ENCODE measurements at regions of chr16 and their contacts with region 1.

Region 1: DNA sequence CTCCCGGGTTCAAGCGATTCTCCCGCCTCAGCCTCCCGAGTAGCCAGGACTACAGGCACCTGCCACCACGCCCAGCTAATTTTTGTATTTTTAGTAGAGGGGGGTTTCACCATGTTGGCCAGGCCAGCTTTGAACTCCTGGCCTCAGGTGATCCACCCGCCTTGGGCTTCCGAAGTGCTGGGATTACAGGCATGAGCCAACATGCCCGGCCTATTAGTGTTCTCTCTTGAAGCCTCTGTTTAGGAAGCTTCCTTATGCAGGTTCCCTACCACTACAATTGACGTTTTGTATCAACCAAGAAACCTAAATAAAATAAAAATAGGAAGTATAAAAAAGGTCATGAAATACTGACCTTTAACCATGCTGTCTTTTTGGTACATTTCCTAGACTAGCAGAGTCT is 16.0 kb downstream of the CHST5 start:
- DNase-seq: no peak
- H3K4me3 Mint-ChIP-seq: no peak overlapping the region
- H3K27ac Mint-ChIP-seq: no peak overlapping the region
- H3K4me1 Mint-ChIP-seq: no peaks in the 10 kb centered on the region
- H3K27me3 Mint-ChIP-seq: no peaks in the 10 kb centered on the region
- CTCF ChIP-seq: no peak

Region 2: DNA sequence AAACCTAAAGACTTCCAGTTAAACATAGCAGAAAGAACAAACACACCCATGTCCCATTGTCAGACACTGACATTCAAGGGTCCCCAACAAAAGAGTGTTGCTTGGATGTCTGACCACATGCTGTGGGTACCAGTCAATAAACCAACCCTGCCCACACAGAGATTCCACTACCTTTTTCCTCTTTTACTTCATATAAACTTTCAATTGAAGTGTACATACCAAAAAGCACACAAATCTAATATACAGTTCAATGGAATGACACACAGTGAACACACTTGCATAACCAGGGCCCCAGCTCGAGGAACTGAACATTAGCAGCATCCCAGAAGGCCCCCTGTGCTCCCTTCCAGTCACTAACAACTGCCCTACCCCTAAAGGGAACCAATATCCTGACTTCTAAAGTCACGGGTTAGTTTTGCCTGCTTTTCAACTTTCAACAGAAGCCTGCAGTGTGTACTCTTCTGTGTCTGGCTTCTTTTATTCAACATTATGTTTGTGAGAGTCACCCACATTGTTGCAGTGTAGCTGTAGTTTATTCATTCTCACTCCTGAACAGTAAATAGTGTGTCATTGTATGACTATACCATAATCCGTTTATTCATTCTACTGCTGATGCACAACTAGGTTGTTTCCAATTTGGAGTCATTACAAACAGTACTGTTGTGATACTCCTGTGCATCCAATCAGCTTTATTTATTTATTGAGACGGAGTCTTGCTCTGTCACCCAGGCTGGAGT is 104.5 kb before region 1 on chr16:
- CTCF ChIA-PET with region 1: no interaction called
- POLR2A ChIA-PET with region 1: no interaction called
- intact Hi-C with region 1: no loop called
- DNase-seq: no peak
- H3K4me3 Mint-ChIP-seq: no peak overlapping the region
- H3K27ac Mint-ChIP-seq: no peak overlapping the region
- H3K4me1 Mint-ChIP-seq: peaks cover 8% of the 10 kb centered on the region
- H3K27me3 Mint-ChIP-seq: no peaks in the 10 kb centered on the region
- CTCF ChIP-seq: no peak

Region 3: GRCh38 chr16:75464130-75464918 is 55.6 kb before region 1 on chr16 and contains the start of gene TMEM170A:
- CTCF ChIA-PET with region 1: interaction called, 88 read pairs
- POLR2A ChIA-PET with region 1: interaction called, 17 read pairs
- intact Hi-C with region 1: no loop called
- DNase-seq: peak; percentile 99
- H3K4me3 Mint-ChIP-seq: peak within 1 kb of the TSS; percentile 95
- H3K27ac Mint-ChIP-seq: peak within 1 kb of the TSS; percentile 92
- H3K4me1 Mint-ChIP-seq: peaks cover 32% of the 10 kb centered on the region
- H3K27me3 Mint-ChIP-seq: no peaks in the 10 kb centered on the region
- CTCF ChIP-seq: peak; percentile 99
- total RNA-seq, gene TMEM170A: 20.1 and 21.8 TPM in 2 replicates

Region 4: DNA sequence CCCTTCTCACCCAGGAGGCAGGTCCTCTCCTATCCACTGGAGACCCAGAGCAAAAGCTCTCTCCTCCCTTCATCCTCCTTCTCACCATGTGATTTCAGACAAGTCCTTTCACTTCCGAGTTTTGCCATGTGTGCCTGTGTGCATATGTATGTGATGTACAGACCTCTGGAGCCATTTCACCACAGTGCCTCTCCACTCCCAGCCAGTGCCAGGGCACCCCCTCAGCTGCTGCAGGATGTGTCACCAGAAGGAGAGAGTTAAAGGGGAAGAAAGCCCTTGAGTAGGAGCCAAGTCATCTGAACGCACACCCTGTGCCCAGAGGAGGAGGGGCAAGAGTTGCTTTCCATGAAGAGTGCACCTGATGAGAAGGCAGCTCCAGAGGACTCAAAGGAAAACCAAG is 41.8 kb before region 1 on chr16:
- CTCF ChIA-PET with region 1: interaction called, 88 read pairs
- POLR2A ChIA-PET with region 1: interaction called, 46 read pairs
- intact Hi-C with region 1: no loop called
- DNase-seq: peak; percentile 67
- H3K4me3 Mint-ChIP-seq: no peak overlapping the region
- H3K27ac Mint-ChIP-seq: no peak overlapping the region
- H3K4me1 Mint-ChIP-seq: peaks cover 23% of the 10 kb centered on the region
- H3K27me3 Mint-ChIP-seq: no peaks in the 10 kb centered on the region
- CTCF ChIP-seq: no peak

Region 5: GRCh38 chr16:75497558-75497957 is 22.3 kb before region 1 on chr16:
- CTCF ChIA-PET with region 1: interaction called, 20 read pairs
- POLR2A ChIA-PET with region 1: interaction called, 4 read pairs
- intact Hi-C with region 1: no loop called
- DNase-seq: no peak
- H3K4me3 Mint-ChIP-seq: no peak overlapping the region
- H3K27ac Mint-ChIP-seq: no peak overlapping the region
- H3K4me1 Mint-ChIP-seq: peaks cover 11% of the 10 kb centered on the region
- H3K27me3 Mint-ChIP-seq: no peaks in the 10 kb centered on the region
- CTCF ChIP-seq: no peak

Region 6: GRCh38 chr16:75550211-75550662 is 30.4 kb after region 1 on chr16:
- CTCF ChIA-PET with region 1: interaction called, 17 read pairs
- POLR2A ChIA-PET with region 1: interaction called, 13 read pairs
- intact Hi-C with region 1: loop called (anchors 2 kb)
- DNase-seq: peak; percentile 82
- H3K4me3 Mint-ChIP-seq: peak overlapping the region; percentile 43
- H3K27ac Mint-ChIP-seq: no peak overlapping the region
- H3K4me1 Mint-ChIP-seq: no peaks in the 10 kb centered on the region
- H3K27me3 Mint-ChIP-seq: no peaks in the 10 kb centered on the region
- CTCF ChIP-seq: peak; percentile 47

Region 7: DNA sequence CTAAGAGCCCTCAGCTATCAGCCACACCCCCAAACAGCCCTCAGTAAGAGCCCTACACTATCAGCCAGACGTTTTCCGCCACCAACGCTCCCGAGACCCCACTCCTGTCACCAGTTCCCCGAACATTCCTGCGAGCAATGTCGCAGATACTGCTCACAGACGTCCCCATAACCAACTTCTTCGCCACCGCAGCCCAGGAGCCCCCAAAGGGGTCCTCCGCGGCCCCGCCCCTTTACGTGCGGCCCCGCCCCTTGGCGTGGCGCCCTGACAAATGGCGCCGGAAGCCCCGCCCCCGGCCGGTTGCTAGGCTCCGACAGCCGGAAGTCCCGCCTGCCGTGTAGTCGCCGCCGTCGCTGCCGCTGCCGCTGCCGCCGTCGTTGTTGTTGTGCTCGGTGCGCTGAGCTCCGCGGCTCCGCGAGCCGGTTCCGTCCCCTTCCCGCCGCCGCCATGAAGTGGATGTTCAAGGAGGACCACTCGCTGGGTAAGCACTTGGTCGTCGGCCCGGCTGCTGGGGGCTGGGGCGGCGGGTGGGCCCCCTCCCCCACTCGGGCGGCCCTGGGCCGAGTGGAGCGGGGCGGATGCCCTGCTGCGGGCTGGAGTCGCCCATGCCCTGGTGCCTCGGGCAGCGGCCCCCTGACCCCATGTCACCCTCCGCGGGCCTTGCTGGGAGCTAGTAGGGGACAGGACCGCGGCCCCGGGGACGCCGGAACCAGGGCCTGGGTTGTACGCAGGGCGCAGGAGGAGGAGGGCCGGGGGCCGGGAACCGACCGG is 46.3 kb after region 1 on chr16 and contains the start of gene GABARAPL2:
- CTCF ChIA-PET with region 1: interaction called, 22 read pairs
- POLR2A ChIA-PET with region 1: interaction called, 10 read pairs
- intact Hi-C with region 1: no loop called
- DNase-seq: peak; percentile 77
- H3K4me3 Mint-ChIP-seq: peak within 1 kb of the TSS; percentile 83
- H3K27ac Mint-ChIP-seq: peak within 1 kb of the TSS; percentile 80
- H3K4me1 Mint-ChIP-seq: peaks cover 7% of the 10 kb centered on the region
- H3K27me3 Mint-ChIP-seq: peaks cover 13% of the 10 kb centered on the region
- CTCF ChIP-seq: no peak
- total RNA-seq, gene GABARAPL2: 61.5 and 70.5 TPM in 2 replicates

Region 8: GRCh38 chr16:75647492-75648264 is 127.8 kb after region 1 on chr16 and contains the starts of genes KARS1 and TERF2IP:
- CTCF ChIA-PET with region 1: interaction called, 5 read pairs
- POLR2A ChIA-PET with region 1: interaction called, 13 read pairs
- intact Hi-C with region 1: no loop called
- DNase-seq: peak; percentile 92
- H3K4me3 Mint-ChIP-seq: peak within 1 kb of the TSS; percentile 76
- H3K27ac Mint-ChIP-seq: peak within 1 kb of the TSS; percentile 98
- H3K4me1 Mint-ChIP-seq: peaks cover 33% of the 10 kb centered on the region
- H3K27me3 Mint-ChIP-seq: no peaks in the 10 kb centered on the region
- CTCF ChIP-seq: no peak
- total RNA-seq, gene KARS1: 213 and 219 TPM in 2 replicates
- total RNA-seq, gene TERF2IP: 73.9 and 80.0 TPM in 2 replicates

Measured in MCF 10A (cell line).